Aorta (tissue), 5 donors: ENCODE measurements at regions of chr16 and their contacts with region 1.

Region 1: DNA sequence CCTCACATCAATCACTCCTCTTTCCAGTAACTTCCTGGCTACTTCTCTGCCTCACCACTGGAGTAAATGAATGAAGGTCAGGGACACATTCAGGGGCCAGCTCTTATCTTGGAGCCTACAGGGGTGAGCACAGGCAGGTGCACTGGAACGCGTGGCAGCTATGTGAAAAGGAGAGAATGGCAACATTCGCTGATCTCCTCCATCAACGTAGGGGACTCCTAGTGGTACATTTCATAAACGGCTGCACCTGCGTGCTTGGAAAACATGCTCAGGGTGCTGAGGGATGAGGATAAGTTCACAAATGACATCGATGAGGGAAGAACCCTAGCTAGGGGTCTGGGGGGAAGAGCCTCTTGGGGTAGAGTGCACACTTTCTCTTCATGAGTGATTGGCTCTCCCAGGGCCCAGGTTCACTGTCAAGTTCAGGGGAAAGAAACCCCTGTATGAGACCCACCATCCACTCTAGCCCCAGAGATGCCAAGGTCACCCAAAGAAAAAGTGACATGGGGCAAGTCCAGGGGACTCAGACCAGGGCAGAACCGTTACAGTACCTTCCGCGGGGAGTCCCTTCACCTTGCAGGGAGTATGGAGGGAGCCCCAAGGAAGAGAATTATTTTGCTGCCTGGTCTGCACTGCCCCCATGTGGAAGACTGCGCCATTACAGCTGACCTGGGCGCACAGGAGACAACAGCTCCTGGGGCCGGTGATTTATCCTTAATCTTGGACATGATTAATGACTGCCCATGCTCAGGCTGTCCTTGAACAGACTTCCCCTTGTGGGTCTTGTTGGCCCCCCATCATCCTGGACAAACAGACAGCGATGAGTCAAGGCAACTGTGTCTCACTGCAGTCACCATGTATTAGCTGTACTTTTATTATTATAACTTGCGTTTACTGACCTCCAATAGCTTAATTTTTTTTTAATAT is 30.1 kb downstream of the VAC14 start:
- DNase-seq: peak in 1 of 2 donors; percentile 85
- ATAC-seq: peak; percentile 81
- H3K4me3 ChIP-seq: no peak overlapping the region
- H3K27ac ChIP-seq: no peak overlapping the region
- H3K4me1 ChIP-seq: no peaks in the 10 kb centered on the region
- H3K27me3 ChIP-seq: no peaks in the 10 kb centered on the region

Region 2: DNA sequence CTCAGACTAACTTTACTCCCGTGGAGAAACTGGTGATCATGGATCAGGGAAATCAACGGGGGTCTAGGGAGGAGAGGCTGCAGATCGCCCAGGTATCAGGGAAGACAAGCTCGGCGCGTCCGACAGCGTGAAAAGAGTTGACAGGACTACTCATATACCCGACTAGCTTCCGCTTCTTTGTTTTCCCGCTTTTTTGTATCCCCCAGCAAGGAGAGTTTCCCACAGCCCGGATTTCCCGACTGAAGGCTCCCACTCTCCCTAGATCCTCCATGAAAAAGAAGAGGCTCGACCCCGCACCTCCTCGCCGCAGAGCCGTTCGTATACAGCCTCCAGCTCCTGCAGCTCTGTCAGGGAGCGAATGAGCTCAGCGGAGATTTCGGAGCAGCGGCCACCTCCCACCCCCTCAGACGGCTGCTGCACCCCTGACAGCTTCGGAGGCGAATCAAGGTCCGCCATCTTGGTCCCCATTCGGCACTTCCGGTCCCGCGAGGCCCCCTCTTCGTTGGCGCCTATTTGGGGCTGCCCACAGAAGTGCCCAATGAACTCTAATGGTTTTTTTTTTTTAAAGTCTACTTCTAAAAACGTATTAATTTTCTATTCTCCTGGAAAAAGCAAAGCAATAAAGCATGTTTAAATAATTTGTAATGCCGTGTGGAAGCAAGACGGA is 247.7 kb before region 1 on chr16 and contains the start of gene COG4:
- intact Hi-C with region 1: loop called in 1 of 2 experiments (anchors 10 kb)
- DNase-seq: peak; percentile 93 to 95
- ATAC-seq: peak; percentile 96
- H3K4me3 ChIP-seq: peak within 1 kb of the TSS; percentile 85 to 94
- H3K27ac ChIP-seq: peak within 1 kb of the TSS; percentile 75 to 77
- H3K4me1 ChIP-seq: peaks cover 0 to 5% of the 10 kb centered on the region in 2 donors
- H3K27me3 ChIP-seq: no peaks in the 10 kb centered on the region
- total RNA-seq, gene COG4: 35.7 to 44.6 TPM

Region 3: DNA sequence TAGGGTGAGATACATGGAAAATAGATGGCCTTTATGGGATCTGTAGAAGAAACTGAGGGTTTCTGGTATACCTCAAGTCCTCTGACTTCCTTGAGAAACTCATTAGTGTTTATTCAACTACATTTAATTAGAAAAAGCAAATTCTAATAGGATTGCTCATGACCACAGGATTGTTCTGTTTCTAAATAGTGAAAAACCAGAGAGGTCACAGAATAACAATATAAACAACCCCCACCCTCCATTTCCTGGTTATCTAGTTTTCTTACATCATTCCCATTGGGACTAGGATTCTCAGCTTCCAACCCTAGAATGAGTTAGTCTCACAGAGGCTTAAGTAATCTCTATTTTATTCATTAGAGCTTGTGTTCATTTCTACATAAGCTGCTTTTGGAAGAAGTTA is 217.2 kb before region 1 on chr16:
- intact Hi-C with region 1: loop called in 1 of 2 experiments (anchors 10 kb)
- DNase-seq: no peak
- ATAC-seq: no peak
- H3K4me3 ChIP-seq: no peak overlapping the region
- H3K27ac ChIP-seq: no peak overlapping the region
- H3K4me1 ChIP-seq: no peaks in the 10 kb centered on the region
- H3K27me3 ChIP-seq: no peaks in the 10 kb centered on the region

Region 4: DNA sequence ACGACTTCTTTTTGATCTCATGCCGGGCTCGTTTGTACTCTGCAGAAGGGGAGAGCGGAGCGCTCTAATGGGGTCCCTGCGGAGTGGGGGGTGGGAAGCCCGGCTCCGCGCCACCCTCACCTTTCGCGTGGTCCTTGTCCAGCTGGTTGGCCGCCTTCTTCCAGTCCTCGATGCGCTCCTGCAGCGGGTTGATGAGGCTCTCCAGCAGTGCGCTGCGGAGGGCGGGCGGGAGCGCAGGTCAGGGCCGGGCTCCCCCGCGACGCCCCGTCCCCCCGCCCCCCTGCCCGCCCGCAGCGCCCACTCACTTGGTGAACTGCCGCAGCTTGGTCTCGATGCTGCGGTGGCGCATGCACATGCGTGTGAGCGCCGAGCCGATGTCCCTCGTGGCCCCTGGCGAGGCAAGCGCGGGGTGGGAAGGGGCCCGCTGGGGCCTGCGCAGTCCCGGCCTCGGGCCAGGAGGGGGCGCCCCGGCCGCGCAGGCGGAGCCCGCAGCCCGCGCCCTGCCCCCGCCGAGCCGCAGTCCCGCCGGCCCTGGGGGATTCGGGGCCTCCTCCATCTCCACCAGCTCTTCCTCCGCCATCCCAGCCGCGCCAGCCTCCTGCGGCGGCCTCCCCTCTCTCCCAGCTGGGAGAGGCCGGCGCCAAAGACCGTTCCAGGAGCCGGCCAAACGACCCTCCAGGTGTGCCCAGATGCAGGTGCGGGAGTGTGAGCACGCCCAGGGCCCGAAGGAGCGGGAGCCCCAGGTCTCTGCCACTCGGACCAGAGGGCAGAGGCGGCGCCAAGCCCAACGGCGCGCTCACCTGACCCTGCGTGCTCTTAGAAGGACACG is 91.0 kb before region 1 on chr16:
- intact Hi-C with region 1: loop called (anchors 1 to 2 kb)
- DNase-seq: peak; percentile 52 to 75
- ATAC-seq: no peak
- H3K4me3 ChIP-seq: no peak overlapping the region
- H3K27ac ChIP-seq: no peak overlapping the region
- H3K4me1 ChIP-seq: no peaks in the 10 kb centered on the region
- H3K27me3 ChIP-seq: no peaks in the 10 kb centered on the region

Region 5: DNA sequence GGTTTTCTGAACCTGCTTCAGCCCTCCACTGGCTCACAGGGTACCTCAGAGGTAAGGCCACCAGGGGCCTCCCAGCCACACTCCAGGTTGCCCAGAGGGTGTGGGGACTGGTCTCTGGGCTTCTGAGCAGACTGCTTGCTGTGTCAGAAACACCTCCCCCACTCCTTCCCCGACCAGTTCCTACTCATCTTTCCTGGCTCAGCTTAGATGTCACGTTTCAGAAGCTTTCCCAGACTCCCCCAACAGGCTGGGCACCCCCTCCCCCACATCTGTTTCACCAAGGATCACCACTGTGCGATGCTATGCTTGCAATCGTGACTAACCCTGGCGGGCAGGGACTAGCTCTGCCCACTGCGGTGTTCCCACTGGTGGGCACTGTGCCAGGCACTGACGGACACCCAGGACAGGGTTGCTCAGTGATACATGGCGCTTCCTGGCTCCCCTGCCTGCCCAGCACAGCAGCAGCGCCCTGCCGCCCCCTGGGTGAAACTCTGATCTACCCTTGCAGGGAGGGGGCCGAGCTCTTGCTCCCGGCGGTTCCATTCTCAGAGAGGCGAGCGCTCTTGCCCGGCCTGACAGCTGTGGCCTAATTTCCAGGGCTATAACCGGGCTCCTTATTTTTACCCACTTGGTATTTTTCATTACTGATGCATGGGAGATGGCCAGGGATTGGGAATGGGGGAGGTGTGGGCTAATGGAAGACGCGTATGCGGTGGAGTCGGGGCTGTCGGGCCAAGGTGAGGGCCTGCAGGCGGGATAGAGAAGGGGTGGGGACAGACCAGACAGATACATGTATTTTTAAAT is 55.6 kb before region 1 on chr16:
- intact Hi-C with region 1: no loop called
- DNase-seq: peak; percentile 95 to 98
- ATAC-seq: peak; percentile 83
- H3K4me3 ChIP-seq: no peak overlapping the region
- H3K27ac ChIP-seq: peak overlapping the region; percentile 47 to 83
- H3K4me1 ChIP-seq: no peaks in the 10 kb centered on the region
- H3K27me3 ChIP-seq: no peaks in the 10 kb centered on the region